ENCODE measurements at regions of chr13 and their contacts with region 1.

Region 1: DNA sequence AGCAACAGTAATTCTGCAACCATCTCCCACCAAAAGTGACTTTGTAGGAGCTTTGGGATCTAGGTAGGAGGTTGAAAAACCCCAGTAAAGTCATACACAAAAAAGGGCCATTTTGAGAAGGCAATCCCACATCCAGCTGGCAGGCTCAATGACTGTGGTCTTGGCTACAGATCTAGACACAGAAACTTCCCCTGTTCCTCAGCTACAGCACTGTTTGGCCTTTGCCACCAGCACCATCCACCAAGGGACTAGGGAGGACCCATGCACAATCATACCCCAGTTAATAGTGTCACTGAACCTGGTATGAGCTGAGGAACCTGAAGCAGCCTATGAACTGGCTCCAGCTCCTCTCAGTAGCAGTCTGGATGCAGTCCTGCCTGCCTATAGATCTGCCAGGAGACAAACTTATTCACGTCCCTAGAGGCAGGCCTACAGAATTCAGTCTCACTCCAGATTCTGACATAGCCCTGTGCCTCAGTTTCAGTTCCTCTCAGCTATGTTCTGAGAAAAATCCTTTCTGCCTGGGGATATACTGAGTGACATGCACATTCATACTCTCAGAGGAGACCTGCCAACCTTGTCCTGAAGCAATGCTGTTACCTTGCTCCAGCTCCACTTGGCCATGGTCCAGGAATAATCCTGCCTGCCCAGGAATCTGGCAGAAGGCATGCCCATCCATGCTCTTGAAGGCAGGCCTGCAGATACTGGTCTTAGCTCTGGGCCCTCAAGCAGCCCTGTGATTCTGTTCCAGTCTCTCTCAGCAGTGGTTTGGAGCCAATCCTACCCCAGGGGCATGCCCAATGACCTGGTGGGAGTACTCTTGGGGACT is 2048.3 kb upstream of the PCDH20 start:
- DNase-seq: no peak
- ATAC-seq: no peak
- H3K4me3 ChIP-seq: no peak overlapping the region
- H3K27ac ChIP-seq: no peak overlapping the region
- H3K4me1 ChIP-seq: no peaks in the 10 kb centered on the region
- CTCF ChIP-seq: no peak
- EP300 ChIP-seq: no peak
- POLR2A ChIP-seq: no peak
- RAD21 ChIP-seq: no peak

Region 2: DNA sequence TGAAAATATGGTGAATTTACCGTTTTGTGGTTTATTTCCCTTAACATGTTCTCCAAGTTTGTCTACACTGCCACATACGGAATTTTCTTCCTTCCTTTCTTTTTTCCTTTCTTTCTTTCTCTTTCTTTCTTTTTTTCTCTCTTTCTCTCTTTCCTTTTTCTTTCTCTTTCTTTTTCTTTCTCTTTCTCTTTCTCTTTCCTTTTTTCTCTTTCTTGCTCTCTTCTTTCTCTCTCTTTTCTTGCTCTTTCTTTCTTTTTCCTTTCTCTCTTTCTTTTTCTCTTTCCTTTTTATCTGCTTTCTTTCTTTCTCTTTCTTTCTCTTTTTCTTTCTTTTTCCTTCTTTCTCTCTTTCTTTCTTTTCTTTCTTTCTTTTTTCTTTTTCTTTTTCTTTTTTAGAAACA is 86.0 kb before region 1 on chr13:
- CTCF ChIA-PET with region 1: no interaction called
- POLR2A ChIA-PET with region 1: interaction called, 11 read pairs
- DNase-seq: no peak
- ATAC-seq: no peak
- H3K4me3 ChIP-seq: no peak overlapping the region
- H3K27ac ChIP-seq: no peak overlapping the region
- H3K4me1 ChIP-seq: no peaks in the 10 kb centered on the region
- CTCF ChIP-seq: no peak
- EP300 ChIP-seq: no peak
- POLR2A ChIP-seq: no peak
- RAD21 ChIP-seq: no peak

Region 3: GRCh38 chr13:63651394-63651793 is 187.4 kb after region 1 on chr13:
- CTCF ChIA-PET with region 1: no interaction called
- POLR2A ChIA-PET with region 1: no interaction called
- DNase-seq: no peak
- ATAC-seq: no peak
- H3K4me3 ChIP-seq: no peak overlapping the region
- H3K27ac ChIP-seq: no peak overlapping the region
- H3K4me1 ChIP-seq: no peaks in the 10 kb centered on the region
- CTCF ChIP-seq: no peak
- EP300 ChIP-seq: no peak
- POLR2A ChIP-seq: no peak
- RAD21 ChIP-seq: no peak

Region 4: GRCh38 chr13:63896321-63896720 is 432.3 kb after region 1 on chr13:
- CTCF ChIA-PET with region 1: no interaction called
- POLR2A ChIA-PET with region 1: no interaction called
- DNase-seq: no peak
- ATAC-seq: no peak
- H3K4me3 ChIP-seq: no peak overlapping the region
- H3K27ac ChIP-seq: no peak overlapping the region
- H3K4me1 ChIP-seq: no peaks in the 10 kb centered on the region
- CTCF ChIP-seq: no peak
- EP300 ChIP-seq: no peak
- POLR2A ChIP-seq: no peak
- RAD21 ChIP-seq: no peak

Measured in A549 (cell line).